MCF 10A (cell line): ENCODE measurements at regions of chr3 and their contacts with region 1.

Region 1: DNA sequence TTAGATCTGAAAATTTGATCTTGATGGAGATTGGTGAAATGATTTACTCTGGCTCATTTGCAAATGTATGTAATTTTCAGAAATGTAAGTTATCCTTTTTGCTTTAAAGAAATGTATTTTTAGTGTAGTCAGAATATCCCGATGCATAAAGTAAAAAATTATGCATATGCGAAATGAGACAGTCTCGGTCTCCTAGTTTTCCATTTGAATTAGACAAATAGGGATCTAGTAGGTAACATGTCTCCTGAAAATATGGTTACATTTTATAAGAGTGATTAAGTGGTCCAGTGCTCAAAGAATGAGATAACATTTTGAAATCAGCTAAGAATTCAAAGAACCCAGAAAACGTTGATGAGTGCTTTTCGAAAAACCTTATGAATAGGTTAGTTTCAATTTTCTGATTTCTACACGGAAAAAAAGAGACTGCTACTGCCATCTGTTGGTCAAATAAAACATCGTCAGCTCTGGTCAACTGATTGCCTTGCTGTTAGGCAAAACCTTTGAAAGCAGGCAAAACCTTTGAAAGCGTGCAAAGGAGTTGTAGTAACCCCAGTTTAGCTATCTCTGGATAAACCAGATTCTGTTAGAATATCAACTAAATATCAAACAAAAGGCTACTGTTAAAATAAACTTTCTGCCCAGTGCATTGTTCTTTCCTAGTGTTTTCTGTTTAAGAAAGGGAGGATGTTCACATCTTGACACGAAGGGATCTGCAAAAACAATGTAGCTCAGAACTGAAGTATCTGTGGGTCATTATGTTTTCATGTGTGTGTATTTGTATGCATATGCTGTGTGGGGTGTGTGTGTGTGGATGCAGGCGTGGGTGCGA is 59.3 kb upstream of the CHMP2B start:
- DNase-seq: peak; percentile 70
- H3K4me3 Mint-ChIP-seq: peak overlapping the region; percentile 75
- H3K27ac Mint-ChIP-seq: peak overlapping the region; percentile 3
- H3K4me1 Mint-ChIP-seq: no peaks in the 10 kb centered on the region
- H3K27me3 Mint-ChIP-seq: no peaks in the 10 kb centered on the region
- CTCF ChIP-seq: peak; percentile 48

Region 2: DNA sequence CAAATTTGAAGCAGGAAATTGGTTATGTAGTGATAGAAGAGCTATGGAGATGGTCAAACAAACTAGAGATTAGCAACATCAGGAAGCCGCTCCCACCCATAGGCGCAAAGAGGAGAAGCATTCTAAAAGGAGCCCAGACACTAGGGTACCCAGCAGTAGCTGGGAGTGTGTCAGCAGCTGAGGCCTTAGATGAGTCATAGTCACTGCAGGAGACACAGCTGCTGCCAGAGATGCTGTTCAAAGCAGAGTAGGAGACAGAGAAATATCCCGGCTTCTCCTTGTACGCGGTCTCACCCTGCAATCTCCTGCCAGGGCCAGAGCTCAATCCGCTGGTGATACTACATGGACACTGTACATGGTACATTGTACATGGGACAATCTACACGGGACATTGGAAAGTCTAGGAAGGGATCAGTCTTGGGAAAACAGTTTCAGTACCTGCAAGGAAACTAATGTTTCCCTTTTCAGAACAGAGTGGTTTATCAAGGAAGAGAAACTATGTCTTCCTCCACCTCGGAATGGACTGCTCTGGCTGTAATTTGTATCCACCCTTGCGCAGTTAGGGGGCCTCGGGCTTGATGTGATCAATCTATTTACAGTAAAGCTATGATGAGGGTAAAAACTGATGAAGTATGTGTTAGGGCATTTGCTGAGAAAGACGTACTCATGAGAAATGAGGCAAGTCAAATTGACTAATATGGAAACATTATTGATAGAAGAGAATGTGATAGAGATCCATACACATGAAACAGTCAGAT is 238.6 kb before region 1 on chr3:
- CTCF ChIA-PET with region 1: no interaction called
- POLR2A ChIA-PET with region 1: no interaction called
- intact Hi-C with region 1: no loop called
- DNase-seq: peak; percentile 56
- H3K4me3 Mint-ChIP-seq: no peak overlapping the region
- H3K27ac Mint-ChIP-seq: no peak overlapping the region
- H3K4me1 Mint-ChIP-seq: peaks cover 14% of the 10 kb centered on the region
- H3K27me3 Mint-ChIP-seq: no peaks in the 10 kb centered on the region
- CTCF ChIP-seq: no peak

Region 3: DNA sequence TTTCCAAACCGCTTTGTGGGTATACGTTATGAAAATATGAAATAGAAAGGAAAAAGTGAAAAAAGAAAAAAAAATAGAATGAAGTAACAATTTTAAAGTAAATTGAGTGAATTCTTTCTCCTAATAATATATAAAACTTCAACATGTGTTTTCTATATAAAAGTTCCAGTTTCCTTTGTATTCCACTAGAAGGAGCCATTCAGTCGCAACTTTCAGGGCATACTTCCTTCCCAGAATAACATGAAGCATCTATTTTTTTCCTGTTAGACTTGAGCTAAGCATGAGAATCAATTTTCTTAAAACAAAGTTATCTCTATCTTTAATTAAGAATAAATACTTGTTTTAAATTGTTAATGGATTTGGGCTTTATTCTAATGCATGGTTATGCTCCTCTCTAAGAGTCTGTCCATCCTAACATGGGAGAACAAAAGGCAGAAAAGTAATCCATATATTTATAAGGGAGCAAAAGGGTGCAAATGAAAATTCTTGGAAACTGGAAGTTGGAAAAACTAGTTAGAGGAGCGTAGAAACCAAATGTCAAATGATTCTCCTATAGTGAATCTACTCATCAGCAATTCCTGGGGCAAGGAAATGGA is 160.9 kb before region 1 on chr3:
- CTCF ChIA-PET with region 1: interaction called, 5 read pairs
- POLR2A ChIA-PET with region 1: no interaction called
- intact Hi-C with region 1: loop called (anchors 5 kb)
- DNase-seq: no peak
- H3K4me3 Mint-ChIP-seq: no peak overlapping the region
- H3K27ac Mint-ChIP-seq: no peak overlapping the region
- H3K4me1 Mint-ChIP-seq: no peaks in the 10 kb centered on the region
- H3K27me3 Mint-ChIP-seq: no peaks in the 10 kb centered on the region
- CTCF ChIP-seq: peak; percentile 34

Region 4: GRCh38 chr3:87109465-87109864 is 58.4 kb before region 1 on chr3:
- CTCF ChIA-PET with region 1: no interaction called
- POLR2A ChIA-PET with region 1: no interaction called
- intact Hi-C with region 1: no loop called
- DNase-seq: no peak
- H3K4me3 Mint-ChIP-seq: no peak overlapping the region
- H3K27ac Mint-ChIP-seq: no peak overlapping the region
- H3K4me1 Mint-ChIP-seq: no peaks in the 10 kb centered on the region
- H3K27me3 Mint-ChIP-seq: no peaks in the 10 kb centered on the region
- CTCF ChIP-seq: no peak

Region 5: GRCh38 chr3:87179642-87180041 is 11.8 kb after region 1 on chr3:
- CTCF ChIA-PET with region 1: interaction called, 22 read pairs
- POLR2A ChIA-PET with region 1: no interaction called
- intact Hi-C with region 1: no loop called
- DNase-seq: no peak
- H3K4me3 Mint-ChIP-seq: no peak overlapping the region
- H3K27ac Mint-ChIP-seq: no peak overlapping the region
- H3K4me1 Mint-ChIP-seq: no peaks in the 10 kb centered on the region
- H3K27me3 Mint-ChIP-seq: no peaks in the 10 kb centered on the region
- CTCF ChIP-seq: no peak

Region 6: GRCh38 chr3:87191641-87192040 is 23.8 kb after region 1 on chr3:
- CTCF ChIA-PET with region 1: interaction called, 13 read pairs
- POLR2A ChIA-PET with region 1: no interaction called
- intact Hi-C with region 1: no loop called
- DNase-seq: no peak
- H3K4me3 Mint-ChIP-seq: no peak overlapping the region
- H3K27ac Mint-ChIP-seq: no peak overlapping the region
- H3K4me1 Mint-ChIP-seq: no peaks in the 10 kb centered on the region
- H3K27me3 Mint-ChIP-seq: no peaks in the 10 kb centered on the region
- CTCF ChIP-seq: no peak